ENCODE measurements at regions of chr2 and their contacts with region 1.

Region 1: DNA sequence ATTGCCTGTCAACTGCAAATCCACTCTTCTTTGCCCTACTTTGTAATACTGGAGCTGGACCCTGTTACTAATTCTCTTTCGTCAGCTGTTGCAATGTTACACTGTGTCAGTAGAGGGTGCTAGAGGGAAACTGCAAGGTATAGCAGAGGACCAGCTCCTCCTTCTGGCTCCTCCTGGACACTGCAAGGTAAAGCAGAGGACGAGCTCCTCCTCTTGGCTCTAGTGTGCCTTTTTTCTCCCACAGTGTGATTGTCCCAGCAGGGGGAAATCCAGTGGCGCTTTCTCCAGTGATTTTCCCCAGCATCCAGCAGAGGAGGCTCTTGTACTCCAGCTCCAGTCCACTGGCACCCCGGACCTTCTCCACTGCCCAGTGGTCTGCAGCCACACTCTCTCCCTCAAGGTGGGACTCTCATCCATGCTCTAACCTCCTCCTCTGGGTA is 95.6 kb downstream of the CAPN13 start:
- DNase-seq: peak; percentile 94
- H3K4me3 ChIP-seq: no peak overlapping the region
- H3K4me3 Mint-ChIP-seq: no peak overlapping the region
- H3K27ac Mint-ChIP-seq: no peak overlapping the region
- H3K4me1 ChIP-seq: no peaks in the 10 kb centered on the region
- H3K4me1 Mint-ChIP-seq: no peaks in the 10 kb centered on the region
- H3K27me3 ChIP-seq: no peaks in the 10 kb centered on the region
- H3K27me3 Mint-ChIP-seq: peaks cover 7% of the 10 kb centered on the region
- CTCF ChIP-seq: peak; percentile 100

Region 2: DNA sequence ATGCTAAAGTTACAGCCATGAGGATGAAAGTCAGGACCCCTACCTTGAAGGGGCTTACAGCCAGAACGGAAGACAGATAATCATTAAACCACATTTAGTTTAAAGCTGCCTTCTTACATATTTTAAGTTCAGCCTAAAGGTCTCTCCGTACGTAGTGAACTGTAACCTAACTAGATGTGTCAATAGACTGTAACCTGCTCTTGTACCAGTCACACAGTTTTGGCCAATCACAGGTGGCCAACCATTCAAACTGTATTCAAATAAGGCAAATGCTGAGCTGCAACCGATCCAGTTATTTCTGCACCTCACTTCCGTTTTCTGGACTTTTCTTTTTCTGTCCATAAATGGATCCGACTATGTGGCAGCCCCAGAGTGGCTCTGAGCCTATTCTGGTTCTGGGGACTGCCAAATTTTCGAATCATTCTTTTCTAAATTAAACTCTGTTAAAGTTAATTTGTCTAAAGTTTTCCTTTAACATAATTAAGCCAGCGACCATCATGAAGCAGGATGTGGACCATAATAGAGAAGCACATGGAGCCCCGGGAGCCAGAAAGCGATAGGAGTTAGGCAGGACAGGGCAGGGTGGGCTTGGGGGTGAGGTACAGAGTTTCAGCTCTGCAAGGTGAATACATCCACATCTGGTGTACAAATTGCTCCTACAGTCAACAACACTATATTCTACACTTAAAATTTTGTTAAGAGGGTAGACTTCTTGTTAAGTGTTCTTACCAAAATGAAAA is 613.2 kb before region 1 on chr2:
- CTCF ChIA-PET with region 1: interaction called, 4 read pairs
- POLR2A ChIA-PET with region 1: no interaction called
- intact Hi-C with region 1: loop called (anchors 5 kb)
- DNase-seq: no peak
- H3K4me3 ChIP-seq: no peak overlapping the region
- H3K4me3 Mint-ChIP-seq: no peak overlapping the region
- H3K27ac Mint-ChIP-seq: no peak overlapping the region
- H3K4me1 ChIP-seq: no peaks in the 10 kb centered on the region
- H3K4me1 Mint-ChIP-seq: no peaks in the 10 kb centered on the region
- H3K27me3 ChIP-seq: 0 out of 2 replicates have a peak, but pooled peaks cover 1% of the 10 kb centered on the region
- H3K27me3 Mint-ChIP-seq: peaks cover 25% of the 10 kb centered on the region
- CTCF ChIP-seq: no peak

Region 3: GRCh38 chr2:30172627-30173026 is 539.0 kb before region 1 on chr2:
- CTCF ChIA-PET with region 1: interaction called, 17 read pairs
- POLR2A ChIA-PET with region 1: no interaction called
- intact Hi-C with region 1: no loop called
- DNase-seq: no peak
- H3K4me3 ChIP-seq: no peak overlapping the region
- H3K4me3 Mint-ChIP-seq: no peak overlapping the region
- H3K27ac Mint-ChIP-seq: no peak overlapping the region
- H3K4me1 ChIP-seq: no peaks in the 10 kb centered on the region
- H3K4me1 Mint-ChIP-seq: no peaks in the 10 kb centered on the region
- H3K27me3 ChIP-seq: no peaks in the 10 kb centered on the region
- H3K27me3 Mint-ChIP-seq: no peaks in the 10 kb centered on the region
- CTCF ChIP-seq: peak in 1 of 2 experiments; percentile 1

Region 4: GRCh38 chr2:30231212-30231995 is 480.3 kb before region 1 on chr2 and contains the start of gene LBH:
- CTCF ChIA-PET with region 1: interaction called, 7 read pairs
- POLR2A ChIA-PET with region 1: no interaction called
- intact Hi-C with region 1: loop called (anchors 10 kb)
- DNase-seq: peak; percentile 87 to 91
- H3K4me3 ChIP-seq: peak within 1 kb of the TSS; percentile 60
- H3K4me3 Mint-ChIP-seq: peak within 1 kb of the TSS; percentile 94
- H3K27ac Mint-ChIP-seq: peak within 1 kb of the TSS; percentile 67
- H3K4me1 ChIP-seq: peaks cover 28% of the 10 kb centered on the region
- H3K4me1 Mint-ChIP-seq: peaks cover 30% of the 10 kb centered on the region
- H3K27me3 ChIP-seq: no peaks in the 10 kb centered on the region
- H3K27me3 Mint-ChIP-seq: no peaks in the 10 kb centered on the region
- CTCF ChIP-seq: peak in 1 of 2 experiments; percentile 10
- total RNA-seq, gene LBH: 126 and 159 TPM in 2 replicates

Region 5: GRCh38 chr2:30559544-30560275 is 152.0 kb before region 1 on chr2:
- CTCF ChIA-PET with region 1: no interaction called
- POLR2A ChIA-PET with region 1: no interaction called
- intact Hi-C with region 1: no loop called
- DNase-seq: no peak
- H3K4me3 ChIP-seq: no peak overlapping the region
- H3K4me3 Mint-ChIP-seq: no peak overlapping the region
- H3K27ac Mint-ChIP-seq: no peak overlapping the region
- H3K4me1 ChIP-seq: no peaks in the 10 kb centered on the region
- H3K4me1 Mint-ChIP-seq: no peaks in the 10 kb centered on the region
- H3K27me3 ChIP-seq: no peaks in the 10 kb centered on the region
- H3K27me3 Mint-ChIP-seq: no peaks in the 10 kb centered on the region
- CTCF ChIP-seq: no peak

Region 6: GRCh38 chr2:30686000-30686399 is 25.7 kb before region 1 on chr2:
- CTCF ChIA-PET with region 1: interaction called, 45 read pairs
- POLR2A ChIA-PET with region 1: no interaction called
- intact Hi-C with region 1: loop called (anchors 1 kb)
- DNase-seq: peak; percentile 73 to 76
- H3K4me3 ChIP-seq: no peak overlapping the region
- H3K4me3 Mint-ChIP-seq: no peak overlapping the region
- H3K27ac Mint-ChIP-seq: no peak overlapping the region
- H3K4me1 ChIP-seq: no peaks in the 10 kb centered on the region; the same call in 1 of the 2 replicates
- H3K4me1 Mint-ChIP-seq: peaks cover 7% of the 10 kb centered on the region
- H3K27me3 ChIP-seq: no peaks in the 10 kb centered on the region
- H3K27me3 Mint-ChIP-seq: no peaks in the 10 kb centered on the region
- CTCF ChIP-seq: peak; percentile 50 to 80

Region 7: GRCh38 chr2:30807249-30807648 is 95.6 kb after region 1 on chr2 and contains the start of gene CAPN13:
- CTCF ChIA-PET with region 1: interaction called, 12 read pairs
- POLR2A ChIA-PET with region 1: no interaction called
- intact Hi-C with region 1: loop called (anchors 1 kb)
- DNase-seq: peak; percentile 83 to 89
- H3K4me3 ChIP-seq: no peak within 1 kb of the TSS
- H3K4me3 Mint-ChIP-seq: peak within 1 kb of the TSS; percentile 69
- H3K27ac Mint-ChIP-seq: peak within 1 kb of the TSS; percentile 65
- H3K4me1 ChIP-seq: peaks cover 12% of the 10 kb centered on the region
- H3K4me1 Mint-ChIP-seq: peaks cover 10% of the 10 kb centered on the region
- H3K27me3 ChIP-seq: no peaks in the 10 kb centered on the region
- H3K27me3 Mint-ChIP-seq: no peaks in the 10 kb centered on the region
- CTCF ChIP-seq: peak; percentile 17 to 63
- total RNA-seq, gene CAPN13: 2.1 and 3.3 TPM in 2 replicates

Region 8: DNA sequence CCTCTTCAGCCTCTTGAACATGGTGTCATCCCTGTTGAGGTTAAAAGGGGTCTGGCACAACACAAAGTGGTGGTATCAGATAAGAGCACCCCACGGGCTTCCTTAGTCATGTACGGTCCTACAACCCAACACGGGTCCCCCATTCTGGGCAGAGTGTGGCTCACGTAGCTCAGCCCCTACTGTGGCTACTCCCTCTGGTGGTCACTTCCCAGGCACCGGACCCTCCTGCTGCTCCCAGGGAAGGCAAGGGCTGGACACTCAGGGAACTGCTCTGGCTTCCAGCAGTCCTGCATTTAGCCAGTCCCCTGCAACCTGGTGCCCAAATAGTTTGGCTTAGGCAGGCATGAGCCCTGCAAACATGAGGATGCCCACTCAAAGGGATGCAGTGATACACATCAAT is 368.0 kb after region 1 on chr2:
- CTCF ChIA-PET with region 1: interaction called, 3 read pairs
- POLR2A ChIA-PET with region 1: no interaction called
- intact Hi-C with region 1: loop called (anchors 5 kb)
- DNase-seq: peak; percentile 39 to 49
- H3K4me3 ChIP-seq: no peak overlapping the region
- H3K4me3 Mint-ChIP-seq: no peak overlapping the region
- H3K27ac Mint-ChIP-seq: no peak overlapping the region
- H3K4me1 ChIP-seq: no peaks in the 10 kb centered on the region
- H3K4me1 Mint-ChIP-seq: no peaks in the 10 kb centered on the region
- H3K27me3 ChIP-seq: peaks cover 2% of the 10 kb centered on the region; the same call in 1 of the 2 replicates
- H3K27me3 Mint-ChIP-seq: peaks cover 14% of the 10 kb centered on the region
- CTCF ChIP-seq: peak; percentile 37 to 61

Measured in Caco-2 (cell line).